PC-9 (cell line): ENCODE measurements at regions of chr18 and their contacts with region 1.

Region 1: GRCh38 chr18:50194631-50195532 is at the start of gene MYO5B:
- DNase-seq: peak; percentile 70 to 86
- H3K4me3 ChIP-seq: peak within 1 kb of the TSS; percentile 90
- H3K27ac ChIP-seq: peak within 1 kb of the TSS; percentile 63
- H3K4me1 ChIP-seq: peaks cover 31% of the 10 kb centered on the region
- H3K27me3 ChIP-seq: no peaks in the 10 kb centered on the region
- CTCF ChIP-seq: peak; percentile 47
- total RNA-seq, gene MYO5B: 23.3 and 25.4 TPM in 2 replicates

Region 2: DNA sequence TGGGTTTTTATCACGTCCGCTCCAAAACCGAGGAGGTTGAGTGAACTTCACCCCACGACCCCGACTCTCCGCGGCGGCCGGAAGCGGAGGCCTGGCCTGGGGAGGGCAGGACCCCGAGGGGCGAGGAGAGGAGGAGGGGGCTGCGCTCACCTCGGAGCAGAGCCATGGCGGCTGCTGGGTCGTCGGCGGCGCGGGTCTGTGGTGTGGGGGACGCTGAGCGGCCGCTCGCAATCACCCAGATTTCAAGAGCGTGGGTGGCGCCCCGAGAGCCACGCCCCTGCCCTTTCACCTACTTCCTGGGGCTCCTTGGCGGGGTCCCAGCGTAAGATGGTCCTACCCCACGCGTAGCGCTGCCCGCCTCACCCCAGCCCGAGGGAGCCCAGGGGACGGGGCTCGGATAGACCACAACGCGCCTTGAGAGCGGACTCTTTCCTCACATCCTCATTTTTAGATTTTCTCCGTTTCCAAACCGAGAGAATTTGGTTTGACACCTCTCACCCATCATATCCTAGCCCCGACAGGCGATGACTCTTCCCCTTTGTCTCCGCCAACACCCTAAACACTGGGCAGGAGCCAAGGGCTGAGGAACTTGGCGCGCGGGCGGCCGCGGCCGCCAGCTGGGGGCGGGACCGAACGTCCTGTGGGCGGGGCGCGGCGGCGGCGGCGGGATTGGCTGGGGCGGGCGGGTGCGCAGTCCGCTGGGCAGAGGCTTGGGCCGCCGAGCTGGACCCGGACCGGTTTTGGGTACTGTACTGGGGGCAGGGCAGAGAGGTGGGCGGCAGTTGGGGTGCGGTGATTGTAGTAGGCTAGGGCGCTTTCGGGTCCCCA is 381.3 kb before region 1 on chr18 and contains the start of gene ACAA2:
- CTCF ChIA-PET with region 1: no interaction called
- POLR2A ChIA-PET with region 1: interaction called, 10 read pairs
- intact Hi-C with region 1: no loop called
- DNase-seq: peak; percentile 72 to 74
- H3K4me3 ChIP-seq: peak within 1 kb of the TSS; percentile 77
- H3K27ac ChIP-seq: peak within 1 kb of the TSS; percentile 72
- H3K4me1 ChIP-seq: peaks cover 23% of the 10 kb centered on the region
- H3K27me3 ChIP-seq: no peaks in the 10 kb centered on the region
- CTCF ChIP-seq: no peak
- total RNA-seq, gene ACAA2: 33.7 and 37.7 TPM in 2 replicates

Region 3: DNA sequence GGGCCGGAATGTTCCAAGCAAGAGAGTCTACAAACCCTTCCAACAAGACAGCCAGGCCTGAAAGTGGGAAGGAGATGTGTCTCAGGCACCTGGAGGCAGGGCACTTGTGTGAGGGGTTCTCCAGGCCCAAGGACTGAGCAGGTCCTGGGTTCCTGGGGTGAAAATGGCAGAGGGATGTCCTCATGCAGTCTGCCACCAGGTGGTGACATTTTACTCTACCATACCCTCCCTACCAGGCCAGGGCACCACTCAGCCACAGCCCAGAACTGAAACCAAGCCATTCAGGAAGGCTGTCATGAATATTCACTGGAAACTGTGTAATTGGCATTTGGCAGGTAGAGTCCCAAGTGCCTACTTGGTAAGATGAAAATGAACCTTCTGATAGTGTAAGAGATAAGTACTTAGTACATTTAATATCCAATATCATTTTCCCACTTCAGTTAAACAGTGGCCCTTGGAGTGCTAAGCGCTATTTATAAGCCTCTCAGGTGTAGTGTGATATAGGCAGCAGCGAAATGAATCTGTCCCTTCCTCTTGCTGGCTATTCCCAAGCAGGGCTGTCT is 185.0 kb before region 1 on chr18:
- CTCF ChIA-PET with region 1: no interaction called
- POLR2A ChIA-PET with region 1: no interaction called
- intact Hi-C with region 1: loop called (anchors 2 kb)
- DNase-seq: peak in 1 of 2 experiments; percentile 46
- H3K4me3 ChIP-seq: no peak overlapping the region
- H3K27ac ChIP-seq: no peak overlapping the region
- H3K4me1 ChIP-seq: peaks cover 11% of the 10 kb centered on the region
- H3K27me3 ChIP-seq: no peaks in the 10 kb centered on the region
- CTCF ChIP-seq: peak; percentile 68

Region 4: GRCh38 chr18:50051288-50051687 is 143.6 kb before region 1 on chr18:
- CTCF ChIA-PET with region 1: no interaction called
- POLR2A ChIA-PET with region 1: no interaction called
- intact Hi-C with region 1: loop called (anchors 1 kb)
- DNase-seq: peak in 1 of 2 experiments; percentile 10
- H3K4me3 ChIP-seq: no peak overlapping the region
- H3K27ac ChIP-seq: no peak overlapping the region
- H3K4me1 ChIP-seq: no peaks in the 10 kb centered on the region
- H3K27me3 ChIP-seq: no peaks in the 10 kb centered on the region
- CTCF ChIP-seq: peak; percentile 64

Region 5: GRCh38 chr18:50111265-50111792 is 83.6 kb before region 1 on chr18:
- CTCF ChIA-PET with region 1: interaction called, 3 read pairs
- POLR2A ChIA-PET with region 1: no interaction called
- intact Hi-C with region 1: loop called (anchors 10 kb)
- DNase-seq: no peak
- H3K4me3 ChIP-seq: no peak overlapping the region
- H3K27ac ChIP-seq: no peak overlapping the region
- H3K4me1 ChIP-seq: peaks cover 29% of the 10 kb centered on the region
- H3K27me3 ChIP-seq: no peaks in the 10 kb centered on the region
- CTCF ChIP-seq: peak; percentile 37; the same call in 1 of the 2 replicates

Region 6: DNA sequence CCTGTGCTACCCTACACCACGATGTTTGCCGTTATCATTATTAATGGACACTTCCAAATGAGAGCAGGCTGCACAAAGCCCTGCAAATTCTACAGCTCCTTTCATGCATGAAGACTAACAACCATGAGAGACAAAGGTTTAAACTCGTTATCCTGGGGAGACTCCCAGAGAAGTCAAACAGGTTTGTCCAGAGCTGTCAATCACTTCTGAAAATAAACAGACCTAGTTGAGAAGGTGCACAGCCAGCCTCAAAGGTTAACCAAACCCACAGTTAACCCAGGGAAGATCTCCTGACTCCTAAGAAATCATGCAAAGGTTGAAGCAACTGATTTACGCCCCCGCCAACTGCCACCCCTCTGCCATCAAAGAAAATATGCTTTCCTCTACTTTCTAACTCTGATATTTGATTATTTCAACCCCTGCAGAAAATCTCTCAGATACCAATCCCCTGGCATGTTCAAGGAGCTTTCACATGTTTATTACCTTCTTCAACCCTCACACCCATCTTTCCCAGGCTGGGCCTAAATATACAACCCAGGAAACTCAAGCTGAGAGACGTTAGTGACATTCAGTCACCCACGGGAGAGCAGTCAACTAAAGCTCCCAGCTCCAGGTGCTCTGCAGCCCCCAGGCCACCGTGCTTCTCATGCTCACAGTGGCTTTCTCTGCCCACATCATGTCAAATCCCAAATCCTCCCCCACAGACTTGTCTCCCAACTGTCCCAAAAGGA is 35.8 kb before region 1 on chr18:
- CTCF ChIA-PET with region 1: interaction called, 17 read pairs
- POLR2A ChIA-PET with region 1: interaction called, 4 read pairs
- intact Hi-C with region 1: loop called (anchors 1 kb)
- DNase-seq: peak; percentile 48 to 98
- H3K4me3 ChIP-seq: peak overlapping the region; percentile 9; the same call in 1 of the 2 replicates
- H3K27ac ChIP-seq: peak overlapping the region; percentile 78
- H3K4me1 ChIP-seq: peaks cover 86% of the 10 kb centered on the region
- H3K27me3 ChIP-seq: no peaks in the 10 kb centered on the region
- CTCF ChIP-seq: no peak

Region 7: DNA sequence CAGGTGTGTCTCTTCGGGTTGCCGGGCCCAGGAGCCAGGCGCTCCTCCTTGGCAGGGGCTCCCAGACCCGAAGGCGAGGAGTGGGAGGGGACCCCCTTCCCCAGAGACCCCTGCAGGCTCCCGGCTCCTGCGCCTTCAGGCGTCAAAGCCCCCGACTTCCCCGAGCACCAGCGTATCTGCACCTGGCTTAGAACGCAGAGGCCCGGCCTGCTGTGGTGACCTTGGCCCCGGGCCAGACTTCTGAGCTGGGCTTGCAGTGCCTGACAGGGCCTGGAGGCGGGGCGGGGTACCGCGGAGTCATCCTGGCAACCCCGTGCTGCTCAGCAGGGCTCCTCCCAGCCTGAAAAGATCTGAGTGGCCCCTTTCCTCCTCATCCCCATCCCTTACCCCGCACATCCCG is 207.0 kb after region 1 on chr18:
- CTCF ChIA-PET with region 1: no interaction called
- POLR2A ChIA-PET with region 1: interaction called, 11 read pairs
- intact Hi-C with region 1: no loop called
- DNase-seq: peak; percentile 40 to 45
- H3K4me3 ChIP-seq: no peak overlapping the region
- H3K27ac ChIP-seq: no peak overlapping the region
- H3K4me1 ChIP-seq: no peaks in the 10 kb centered on the region
- H3K27me3 ChIP-seq: peaks cover 15% of the 10 kb centered on the region
- CTCF ChIP-seq: no peak